Left cardiac atrium (tissue), 4 donors: ENCODE measurements at regions of chr2 and their contacts with region 1.

Region 1: GRCh38 chr2:134539981-134540380 is 178.8 kb downstream of the TMEM163 start:
- DNase-seq: no peak
- ATAC-seq: peak; percentile 21 to 24

Region 2: DNA sequence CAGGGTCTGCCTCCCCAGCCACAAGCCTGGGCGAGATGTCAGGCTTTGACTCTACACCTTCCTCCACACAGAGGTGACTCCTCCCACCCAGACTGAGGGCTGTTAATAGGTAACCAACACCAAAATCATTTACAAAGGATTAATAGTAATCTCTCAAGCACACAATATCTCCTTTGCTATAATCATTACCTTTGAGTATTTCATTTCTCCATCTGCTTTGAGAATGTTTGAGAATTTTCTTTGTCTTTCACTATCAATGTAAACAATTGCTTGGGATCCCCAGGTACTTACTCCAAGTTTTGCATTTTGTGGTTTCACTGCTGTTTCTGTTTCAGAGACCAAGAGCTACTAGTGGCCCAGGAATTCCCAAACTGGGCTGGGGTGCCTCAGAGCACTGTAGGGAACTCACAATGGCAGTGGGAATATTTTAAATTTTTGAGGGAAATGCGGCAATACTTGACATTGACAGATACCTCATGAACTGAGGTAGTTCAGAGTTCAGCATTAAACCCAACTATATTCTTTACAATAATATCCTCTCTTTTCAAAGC is 452.5 kb before region 1 on chr2:
- intact Hi-C with region 1: no loop called
- DNase-seq: no peak
- ATAC-seq: no peak

Region 3: DNA sequence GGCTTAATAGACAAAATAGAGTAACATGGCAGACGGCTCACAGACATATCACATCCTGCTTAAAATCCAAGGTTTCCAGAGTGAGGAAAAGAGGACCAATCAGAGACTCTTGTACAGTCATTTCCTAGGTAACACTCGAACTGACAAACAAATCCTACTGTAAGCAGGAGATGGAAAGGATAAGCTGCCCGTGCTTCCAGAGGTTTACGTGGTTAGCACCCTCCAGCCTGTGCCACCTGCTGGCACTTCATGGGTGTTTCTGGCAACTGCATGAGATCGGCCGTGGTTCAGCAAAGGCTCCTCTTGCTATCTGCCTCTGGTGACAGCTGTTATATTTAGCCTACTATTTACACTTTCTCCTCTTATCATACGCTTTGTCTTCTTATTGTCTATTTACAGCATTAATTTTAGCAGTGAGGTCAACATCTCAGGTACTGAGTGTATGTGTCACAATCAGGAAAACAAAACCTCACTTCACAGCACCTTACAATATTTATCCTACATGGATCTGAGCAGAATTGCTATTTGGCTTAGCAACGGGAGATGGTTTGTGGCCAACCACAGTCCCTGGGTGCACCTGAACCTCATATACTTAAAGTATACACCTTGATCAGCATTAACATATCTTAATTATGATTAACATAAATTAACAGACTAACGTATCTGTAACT is 48.1 kb before region 1 on chr2:
- intact Hi-C with region 1: loop called in 1 of 2 experiments (anchors 5 kb)
- DNase-seq: peak; percentile 64
- ATAC-seq: peak; percentile 71 to 84

Region 4: GRCh38 chr2:134522496-134523455 is 17.2 kb before region 1 on chr2:
- intact Hi-C with region 1: no loop called
- DNase-seq: no peak
- ATAC-seq: no peak

Region 5: GRCh38 chr2:134581877-134582546 is 42.0 kb after region 1 on chr2:
- intact Hi-C with region 1: no loop called
- DNase-seq: no peak
- ATAC-seq: no peak